Vagina (tissue), 2 donors: ENCODE measurements at regions of chr15 and their contacts with region 1.

Region 1: GRCh38 chr15:98421419-98422129 is 226.8 kb upstream of the IGF1R start:
- DNase-seq: no peak
- H3K4me3 ChIP-seq: peak overlapping the region; percentile 27 to 35
- H3K27ac ChIP-seq: peak overlapping the region; percentile 47
- H3K4me1 ChIP-seq: peaks cover 12% of the 10 kb centered on the region
- H3K27me3 ChIP-seq: no peaks in the 10 kb centered on the region
- CTCF ChIP-seq: peak; percentile 93 to 98 (median 96)
- POLR2A ChIP-seq: no peak

Region 2: GRCh38 chr15:98311566-98312188 is 109.9 kb before region 1 on chr15:
- intact Hi-C with region 1: loop called (anchors 2 kb)
- DNase-seq: peak; percentile 22 to 87
- H3K4me3 ChIP-seq: no peak overlapping the region
- H3K27ac ChIP-seq: no peak overlapping the region
- H3K4me1 ChIP-seq: no peaks in the 10 kb centered on the region
- H3K27me3 ChIP-seq: no peaks in the 10 kb centered on the region
- CTCF ChIP-seq: peak; percentile 76 to 90 (median 80)
- POLR2A ChIP-seq: no peak